Right lobe of liver (tissue), 6 donors: ENCODE measurements at regions of chr1 and their contacts with region 1.

Region 1: DNA sequence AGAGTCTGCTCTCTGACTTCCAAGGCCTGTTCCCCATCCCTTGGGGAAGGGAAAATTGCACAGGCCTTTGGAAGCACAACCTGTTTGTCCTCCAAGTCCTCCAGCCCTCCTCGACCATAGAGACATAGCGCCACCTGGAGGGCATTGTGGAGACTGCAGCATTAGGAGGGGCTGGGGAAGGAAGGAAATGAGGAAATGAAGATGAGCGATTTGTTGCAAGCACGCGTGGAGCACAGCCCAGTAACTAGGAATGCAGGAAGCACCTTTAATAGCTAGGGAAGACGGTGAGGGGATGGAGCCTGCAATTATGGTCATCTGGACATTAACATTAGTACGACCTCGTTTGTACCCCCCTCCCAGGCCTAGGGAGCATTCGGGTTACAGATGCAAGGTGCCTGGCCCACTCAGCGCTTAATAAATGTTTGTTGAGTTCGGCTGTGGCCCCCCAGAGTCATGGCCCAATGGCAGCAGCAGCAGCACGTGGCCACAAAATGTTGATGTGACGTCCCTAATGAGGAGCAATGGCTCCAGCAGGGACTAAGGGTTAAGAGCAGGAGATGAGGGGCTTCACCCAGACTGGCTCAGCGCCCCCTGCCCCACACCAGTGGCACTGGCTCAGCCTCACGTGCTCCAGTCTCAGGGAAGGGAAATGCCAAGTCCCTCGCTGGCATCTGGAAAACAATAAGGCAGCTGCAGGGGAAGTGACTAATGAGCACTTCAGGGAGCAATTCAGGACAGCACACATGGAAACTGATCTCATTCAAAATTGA is 8.0 kb upstream of the CAMK2N1 start:
- DNase-seq: peak; percentile 79 to 83 (median 80)
- ATAC-seq: peak; percentile 86 to 97 (median 93)
- H3K4me3 ChIP-seq: no peak overlapping the region
- H3K27ac ChIP-seq: no peak overlapping the region
- H3K4me1 ChIP-seq: no peaks in the 10 kb centered on the region
- H3K27me3 ChIP-seq: no peaks in the 10 kb centered on the region
- CTCF ChIP-seq: peak; percentile 92 to 98 (median 96)
- POLR2A ChIP-seq: no peak

Region 2: GRCh38 chr1:20212685-20213331 is 281.2 kb before region 1 on chr1:
- intact Hi-C with region 1: loop called in 1 of 2 experiments (anchors 10 kb)
- DNase-seq: peak; percentile 64 to 74 (median 68)
- ATAC-seq: peak; percentile 79 to 88 (median 82)
- H3K4me3 ChIP-seq: no peak overlapping the region
- H3K27ac ChIP-seq: no peak overlapping the region
- H3K4me1 ChIP-seq: peaks cover 0 to 3% (median 0%) of the 10 kb centered on the region in 4 donors
- H3K27me3 ChIP-seq: no peaks in the 10 kb centered on the region
- CTCF ChIP-seq: peak; percentile 49 to 84 (median 82)
- POLR2A ChIP-seq: no peak

Region 3: GRCh38 chr1:20255666-20256065 is 238.4 kb before region 1 on chr1:
- intact Hi-C with region 1: no loop called
- DNase-seq: no peak
- ATAC-seq: no peak
- H3K4me3 ChIP-seq: no peak overlapping the region
- H3K27ac ChIP-seq: no peak overlapping the region
- H3K4me1 ChIP-seq: peaks cover 0 to 6% (median 0%) of the 10 kb centered on the region in 4 donors
- H3K27me3 ChIP-seq: no peaks in the 10 kb centered on the region
- CTCF ChIP-seq: no peak
- POLR2A ChIP-seq: no peak

Region 4: GRCh38 chr1:20376880-20377494 is 117.0 kb before region 1 on chr1:
- intact Hi-C with region 1: loop called in 1 of 2 experiments (anchors 10 kb)
- DNase-seq: peak in 1 of 3 donors; percentile 46
- ATAC-seq: peak; percentile 78 to 89 (median 82)
- H3K4me3 ChIP-seq: no peak overlapping the region
- H3K27ac ChIP-seq: no peak overlapping the region
- H3K4me1 ChIP-seq: no peaks in the 10 kb centered on the region
- H3K27me3 ChIP-seq: no peaks in the 10 kb centered on the region
- CTCF ChIP-seq: peak; percentile 55 to 82 (median 73)
- POLR2A ChIP-seq: no peak